Activated CD8-positive, alpha-beta T cell treated with anti-CD3 and anti-CD28 coated beads, Interleukin-2, amount 10 ng/mL, durations not matched to agents 7 days and 5 days (primary cell): ENCODE measurements at regions of chr3 and their contacts with region 1.

Region 1: GRCh38 chr3:32177702-32178198 is 60.7 kb upstream of the CMTM8 start:
- DNase-seq: peak; percentile 63
- ATAC-seq: peak; percentile 80
- H3K4me3 Mint-ChIP-seq: no peak overlapping the region
- H3K27ac Mint-ChIP-seq: no peak overlapping the region
- H3K4me1 Mint-ChIP-seq: peaks cover 6% of the 10 kb centered on the region
- H3K27me3 Mint-ChIP-seq: peaks cover 14% of the 10 kb centered on the region

Region 2: DNA sequence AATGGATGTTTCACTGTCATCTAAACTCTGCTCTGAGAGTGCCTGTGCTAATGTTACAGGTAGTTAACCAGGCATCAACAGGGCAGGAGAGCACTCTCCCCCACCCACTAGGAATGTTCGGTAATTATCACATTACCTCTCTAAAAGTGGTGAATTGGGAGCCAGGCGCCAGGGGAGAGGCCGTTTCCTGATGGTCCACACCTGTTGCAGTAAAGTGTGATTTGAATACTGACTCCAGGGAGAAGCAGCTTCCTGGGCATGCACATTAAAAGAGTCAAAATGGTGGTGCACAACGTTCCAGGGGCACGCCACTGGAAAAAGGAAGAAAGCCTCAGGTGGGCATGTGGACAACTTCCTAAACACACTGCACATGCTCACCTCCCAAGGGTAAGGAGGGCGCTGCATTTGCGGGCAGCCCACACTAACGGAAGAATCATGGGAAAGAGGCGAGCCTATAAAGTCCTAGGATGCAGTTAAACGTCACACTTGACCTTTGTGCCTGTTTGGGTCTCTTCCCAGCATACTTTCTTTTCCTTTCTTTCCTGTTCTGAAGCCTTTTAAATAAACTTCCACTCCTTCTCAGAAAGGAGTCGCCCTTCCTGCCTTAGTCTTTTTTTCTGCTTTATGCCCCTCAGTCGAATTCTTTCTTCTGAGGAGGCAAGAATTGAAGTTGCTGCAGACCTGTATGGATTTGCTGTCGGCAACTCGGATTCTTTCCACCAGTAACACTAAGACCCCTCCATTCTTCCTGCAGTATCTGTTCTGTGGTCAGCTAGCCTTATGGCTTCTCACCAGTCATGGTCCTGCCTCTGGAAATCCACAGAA is 100.3 kb before region 1 on chr3:
- CTCF ChIA-PET with region 1: no interaction called
- POLR2A ChIA-PET with region 1: no interaction called
- DNase-seq: no peak
- ATAC-seq: no peak
- H3K4me3 Mint-ChIP-seq: no peak overlapping the region
- H3K27ac Mint-ChIP-seq: no peak overlapping the region
- H3K4me1 Mint-ChIP-seq: no peaks in the 10 kb centered on the region
- H3K27me3 Mint-ChIP-seq: peaks cover 12% of the 10 kb centered on the region

Region 3: DNA sequence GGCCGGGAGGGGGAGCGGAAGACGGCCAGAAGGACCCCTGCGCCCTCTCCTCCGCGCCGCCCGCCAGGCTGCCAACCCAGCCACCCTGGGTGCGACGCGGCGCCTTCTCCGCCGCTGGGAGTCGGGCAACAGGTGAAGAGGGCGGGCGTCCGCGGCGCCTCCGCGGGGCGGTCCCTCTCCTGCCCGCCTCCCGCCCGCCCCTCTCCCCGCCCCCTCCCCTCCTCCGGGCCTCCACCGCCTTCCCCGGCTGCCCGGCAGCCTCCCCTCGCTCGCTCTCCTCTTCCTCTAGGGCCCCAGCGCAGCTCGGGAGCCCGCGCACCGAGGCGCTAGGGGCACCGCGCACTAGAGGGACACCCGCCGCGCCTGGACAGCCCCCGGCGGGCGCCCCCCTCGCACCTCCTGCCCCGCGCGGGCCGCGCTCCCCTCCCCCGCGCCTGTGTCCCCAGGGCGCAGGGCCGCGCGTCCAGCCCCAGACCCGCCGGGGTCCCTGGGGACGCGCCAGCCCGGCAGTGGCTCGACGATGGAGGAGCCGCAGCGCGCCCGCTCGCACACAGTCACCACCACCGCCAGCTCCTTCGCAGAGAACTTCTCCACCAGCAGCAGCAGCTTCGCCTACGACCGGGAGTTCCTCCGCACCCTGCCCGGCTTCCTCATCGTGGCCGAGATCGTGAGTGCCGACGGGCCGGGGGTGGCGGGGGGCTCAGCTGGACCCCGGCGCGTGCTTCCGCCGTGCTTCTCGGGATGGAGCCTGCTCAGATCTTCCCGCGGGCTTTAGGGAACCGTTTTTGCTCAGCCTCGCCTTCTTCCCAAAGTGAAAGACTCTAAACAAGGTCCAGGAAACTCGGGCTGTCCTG is 60.9 kb after region 1 on chr3 and contains the start of gene CMTM8:
- CTCF ChIA-PET with region 1: interaction called, 12 read pairs
- POLR2A ChIA-PET with region 1: no interaction called
- DNase-seq: peak; percentile 64
- ATAC-seq: peak; percentile 85
- H3K4me3 Mint-ChIP-seq: peak within 1 kb of the TSS; percentile 78
- H3K27ac Mint-ChIP-seq: no peak within 1 kb of the TSS
- H3K4me1 Mint-ChIP-seq: peaks cover 22% of the 10 kb centered on the region
- H3K27me3 Mint-ChIP-seq: peaks cover 39% of the 10 kb centered on the region
- total RNA-seq, gene CMTM8: 2.1 TPM

Region 4: GRCh38 chr3:32285891-32286290 is 108.1 kb after region 1 on chr3:
- CTCF ChIA-PET with region 1: interaction called, 22 read pairs
- POLR2A ChIA-PET with region 1: no interaction called
- DNase-seq: no peak
- ATAC-seq: no peak
- H3K4me3 Mint-ChIP-seq: no peak overlapping the region
- H3K27ac Mint-ChIP-seq: no peak overlapping the region
- H3K4me1 Mint-ChIP-seq: peaks cover 7% of the 10 kb centered on the region
- H3K27me3 Mint-ChIP-seq: no peaks in the 10 kb centered on the region

Region 5: GRCh38 chr3:32325957-32326356 is 148.2 kb after region 1 on chr3:
- CTCF ChIA-PET with region 1: interaction called, 42 read pairs
- POLR2A ChIA-PET with region 1: no interaction called
- DNase-seq: no peak
- ATAC-seq: no peak
- H3K4me3 Mint-ChIP-seq: no peak overlapping the region
- H3K27ac Mint-ChIP-seq: no peak overlapping the region
- H3K4me1 Mint-ChIP-seq: no peaks in the 10 kb centered on the region
- H3K27me3 Mint-ChIP-seq: peaks cover 4% of the 10 kb centered on the region

Region 6: GRCh38 chr3:32334675-32335074 is 156.9 kb after region 1 on chr3:
- CTCF ChIA-PET with region 1: interaction called, 42 read pairs
- POLR2A ChIA-PET with region 1: no interaction called
- DNase-seq: peak; percentile 56
- ATAC-seq: peak; percentile 60
- H3K4me3 Mint-ChIP-seq: no peak overlapping the region
- H3K27ac Mint-ChIP-seq: no peak overlapping the region
- H3K4me1 Mint-ChIP-seq: peaks cover 18% of the 10 kb centered on the region
- H3K27me3 Mint-ChIP-seq: no peaks in the 10 kb centered on the region

Region 7: GRCh38 chr3:32340039-32340438 is 162.3 kb after region 1 on chr3:
- CTCF ChIA-PET with region 1: interaction called, 42 read pairs
- POLR2A ChIA-PET with region 1: no interaction called
- DNase-seq: peak; percentile 39
- ATAC-seq: peak; percentile 80
- H3K4me3 Mint-ChIP-seq: no peak overlapping the region
- H3K27ac Mint-ChIP-seq: no peak overlapping the region
- H3K4me1 Mint-ChIP-seq: peaks cover 11% of the 10 kb centered on the region
- H3K27me3 Mint-ChIP-seq: no peaks in the 10 kb centered on the region

Region 8: DNA sequence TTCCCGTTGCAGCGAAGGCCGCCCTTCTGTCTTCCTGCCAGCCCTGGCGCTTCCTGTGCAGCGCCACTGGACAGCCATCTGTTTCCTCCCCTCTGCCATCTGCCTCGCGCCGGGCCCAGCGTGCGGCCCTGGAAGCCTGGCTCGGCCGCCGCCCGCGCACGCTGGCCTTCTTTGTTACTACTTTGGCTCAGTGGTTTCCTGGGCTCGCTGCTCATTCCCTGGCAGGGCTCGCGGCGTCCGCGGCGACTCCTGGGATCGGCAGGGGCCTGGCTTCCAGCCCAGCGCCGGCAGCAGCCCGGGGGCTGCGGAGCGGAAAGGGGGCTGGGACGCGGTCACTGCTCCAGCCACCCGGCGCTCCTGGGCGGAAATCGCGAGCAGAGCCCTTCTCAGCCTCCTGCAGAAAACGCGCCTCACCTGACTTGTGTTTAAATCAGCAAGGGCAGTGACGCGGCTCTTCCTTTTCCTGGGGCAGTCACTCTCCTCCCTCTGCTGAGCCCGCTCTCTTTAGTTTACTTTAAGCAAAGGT is 223.9 kb after region 1 on chr3:
- CTCF ChIA-PET with region 1: interaction called, 10 read pairs
- POLR2A ChIA-PET with region 1: no interaction called
- DNase-seq: peak; percentile 82
- ATAC-seq: peak; percentile 83
- H3K4me3 Mint-ChIP-seq: peak overlapping the region; percentile 85
- H3K27ac Mint-ChIP-seq: peak overlapping the region; percentile 98
- H3K4me1 Mint-ChIP-seq: peaks cover 68% of the 10 kb centered on the region
- H3K27me3 Mint-ChIP-seq: no peaks in the 10 kb centered on the region